ENCODE measurements at regions of chr10 and their contacts with region 1.

Region 1: GRCh38 chr10:103244663-103245271 is 920 bp upstream of the RPEL1 start:
- DNase-seq: peak; percentile 68
- H3K4me3 ChIP-seq: no peak overlapping the region
- H3K27ac ChIP-seq: no peak overlapping the region
- H3K4me1 ChIP-seq: peaks cover 20% of the 10 kb centered on the region
- H3K27me3 ChIP-seq: no peaks in the 10 kb centered on the region
- CTCF ChIP-seq: peak; percentile 96 to 99

Region 2: GRCh38 chr10:102835007-102835482 is 409.7 kb before region 1 on chr10:
- CTCF ChIA-PET with region 1: interaction called, 3 read pairs
- dilution Hi-C with region 1: no loop called
- in situ Hi-C with region 1: no loop called
- intact Hi-C with region 1: loop called (anchors 2 kb)
- DNase-seq: peak; percentile 39
- H3K4me3 ChIP-seq: no peak overlapping the region
- H3K27ac ChIP-seq: no peak overlapping the region
- H3K4me1 ChIP-seq: no peaks in the 10 kb centered on the region
- H3K27me3 ChIP-seq: no peaks in the 10 kb centered on the region
- CTCF ChIP-seq: peak; percentile 70 to 89

Region 3: GRCh38 chr10:102927311-102928010 is 317.3 kb before region 1 on chr10:
- CTCF ChIA-PET with region 1: no interaction called
- dilution Hi-C with region 1: no loop called
- in situ Hi-C with region 1: loop called (anchors 10 to 25 kb)
- intact Hi-C with region 1: no loop called
- DNase-seq: no peak
- H3K4me3 ChIP-seq: no peak overlapping the region
- H3K27ac ChIP-seq: no peak overlapping the region
- H3K4me1 ChIP-seq: no peaks in the 10 kb centered on the region
- H3K27me3 ChIP-seq: no peaks in the 10 kb centered on the region
- CTCF ChIP-seq: no peak

Region 4: GRCh38 chr10:103053659-103054581 is 190.8 kb before region 1 on chr10:
- CTCF ChIA-PET with region 1: no interaction called
- dilution Hi-C with region 1: no loop called
- in situ Hi-C with region 1: no loop called
- intact Hi-C with region 1: no loop called
- DNase-seq: peak; percentile 68
- H3K4me3 ChIP-seq: peak overlapping the region in 1 of 3 experiments; percentile 25
- H3K27ac ChIP-seq: no peak overlapping the region
- H3K4me1 ChIP-seq: peaks cover 6% of the 10 kb centered on the region
- H3K27me3 ChIP-seq: no peaks in the 10 kb centered on the region
- CTCF ChIP-seq: peak in 1 of 2 donors; percentile 53

Region 5: GRCh38 chr10:103104721-103105120 is 140.0 kb before region 1 on chr10:
- CTCF ChIA-PET with region 1: no interaction called
- dilution Hi-C with region 1: no loop called
- in situ Hi-C with region 1: no loop called
- intact Hi-C with region 1: loop called (anchors 5 kb)
- DNase-seq: no peak
- H3K4me3 ChIP-seq: no peak overlapping the region
- H3K27ac ChIP-seq: no peak overlapping the region
- H3K4me1 ChIP-seq: no peaks in the 10 kb centered on the region
- H3K27me3 ChIP-seq: no peaks in the 10 kb centered on the region
- CTCF ChIP-seq: no peak

Region 6: DNA sequence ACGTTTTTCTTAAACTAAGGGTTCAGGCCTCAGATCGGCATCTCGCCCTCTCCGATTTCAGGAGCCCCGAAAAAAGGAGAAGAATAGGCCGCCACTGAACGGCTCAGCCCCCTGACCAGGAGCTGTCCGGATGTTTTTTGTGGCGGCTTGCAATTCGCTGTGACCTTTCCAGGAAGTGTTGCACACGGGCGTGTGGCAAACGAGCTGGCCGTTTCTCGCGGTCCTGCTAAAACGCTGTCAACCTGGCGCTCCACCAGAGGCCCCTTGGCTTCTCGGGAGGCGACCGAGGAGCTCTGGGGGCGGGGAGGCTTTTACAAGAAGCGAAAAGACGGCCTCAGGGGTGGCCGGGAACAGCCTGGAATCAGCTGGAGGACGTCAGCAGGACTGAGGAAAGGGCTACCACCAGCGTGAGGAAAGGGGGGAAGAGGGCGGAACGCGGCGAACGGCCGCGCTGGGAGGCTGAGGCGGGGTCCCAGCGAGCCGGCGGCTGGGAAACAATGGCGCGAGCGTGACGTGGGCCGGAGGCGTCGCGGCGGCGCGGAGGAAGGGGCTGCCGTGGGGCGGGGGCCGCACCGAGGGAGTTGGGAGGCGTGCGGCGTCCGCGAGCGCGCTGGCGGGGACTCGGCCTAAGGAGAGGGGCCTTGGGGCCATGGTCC is 52.2 kb before region 1 on chr10:
- CTCF ChIA-PET with region 1: no interaction called
- dilution Hi-C with region 1: loop called (anchors 5 kb)
- in situ Hi-C with region 1: no loop called
- intact Hi-C with region 1: loop called (anchors 1 kb)
- DNase-seq: peak; percentile 73
- H3K4me3 ChIP-seq: peak overlapping the region; percentile 84 to 89 (median 88)
- H3K27ac ChIP-seq: peak overlapping the region; percentile 86
- H3K4me1 ChIP-seq: peaks cover 7% of the 10 kb centered on the region
- H3K27me3 ChIP-seq: no peaks in the 10 kb centered on the region
- CTCF ChIP-seq: no peak

Region 7: GRCh38 chr10:103333925-103334520 is 89.3 kb after region 1 on chr10:
- CTCF ChIA-PET with region 1: interaction called, 10 read pairs
- dilution Hi-C with region 1: no loop called
- in situ Hi-C with region 1: no loop called
- intact Hi-C with region 1: loop called (anchors 1 kb)
- DNase-seq: no peak
- H3K4me3 ChIP-seq: no peak overlapping the region
- H3K27ac ChIP-seq: no peak overlapping the region
- H3K4me1 ChIP-seq: no peaks in the 10 kb centered on the region
- H3K27me3 ChIP-seq: no peaks in the 10 kb centered on the region
- CTCF ChIP-seq: peak; percentile 57 to 70

Region 8: DNA sequence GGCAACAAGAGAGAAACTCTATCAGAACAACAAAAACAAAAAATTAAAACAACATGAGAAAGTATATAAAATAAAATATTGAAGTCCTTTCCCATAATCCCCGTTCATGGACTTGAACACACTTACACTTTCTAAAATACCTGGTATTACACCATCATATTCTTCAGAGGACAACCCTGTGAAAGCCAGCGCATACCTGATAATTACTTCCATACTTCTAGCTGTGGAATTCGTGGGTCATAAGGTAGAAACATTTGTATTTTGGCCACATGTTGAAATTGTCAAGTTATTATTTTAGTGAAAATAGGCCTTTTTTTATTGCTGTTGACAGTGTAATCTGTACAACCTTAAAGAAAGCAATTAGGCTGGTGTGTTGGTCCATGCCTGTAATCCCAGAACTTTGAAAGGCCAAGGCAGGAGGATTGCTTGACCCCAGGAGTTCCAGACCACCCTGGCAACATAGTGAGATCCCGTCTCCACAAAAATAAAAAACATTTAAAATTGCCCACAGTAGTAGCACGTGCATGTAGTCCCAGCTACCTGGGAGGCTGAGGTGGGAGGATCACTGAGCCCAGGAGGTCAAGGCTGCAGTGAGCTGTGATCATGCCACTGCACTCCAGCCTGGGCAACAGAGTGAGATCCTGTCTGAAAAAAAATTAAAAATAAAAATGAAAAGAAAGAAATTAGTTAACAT is 111.3 kb after region 1 on chr10:
- CTCF ChIA-PET with region 1: no interaction called
- dilution Hi-C with region 1: no loop called
- in situ Hi-C with region 1: no loop called
- intact Hi-C with region 1: no loop called
- DNase-seq: no peak
- H3K4me3 ChIP-seq: no peak overlapping the region
- H3K27ac ChIP-seq: peak overlapping the region; percentile 15
- H3K4me1 ChIP-seq: peaks cover 2% of the 10 kb centered on the region
- H3K27me3 ChIP-seq: no peaks in the 10 kb centered on the region
- CTCF ChIP-seq: no peak

Measured in mammary epithelial cell (primary cell).